Endothelial cell of umbilical vein (primary cell): ENCODE measurements at regions of chr11 and their contacts with region 1.

Region 1: DNA sequence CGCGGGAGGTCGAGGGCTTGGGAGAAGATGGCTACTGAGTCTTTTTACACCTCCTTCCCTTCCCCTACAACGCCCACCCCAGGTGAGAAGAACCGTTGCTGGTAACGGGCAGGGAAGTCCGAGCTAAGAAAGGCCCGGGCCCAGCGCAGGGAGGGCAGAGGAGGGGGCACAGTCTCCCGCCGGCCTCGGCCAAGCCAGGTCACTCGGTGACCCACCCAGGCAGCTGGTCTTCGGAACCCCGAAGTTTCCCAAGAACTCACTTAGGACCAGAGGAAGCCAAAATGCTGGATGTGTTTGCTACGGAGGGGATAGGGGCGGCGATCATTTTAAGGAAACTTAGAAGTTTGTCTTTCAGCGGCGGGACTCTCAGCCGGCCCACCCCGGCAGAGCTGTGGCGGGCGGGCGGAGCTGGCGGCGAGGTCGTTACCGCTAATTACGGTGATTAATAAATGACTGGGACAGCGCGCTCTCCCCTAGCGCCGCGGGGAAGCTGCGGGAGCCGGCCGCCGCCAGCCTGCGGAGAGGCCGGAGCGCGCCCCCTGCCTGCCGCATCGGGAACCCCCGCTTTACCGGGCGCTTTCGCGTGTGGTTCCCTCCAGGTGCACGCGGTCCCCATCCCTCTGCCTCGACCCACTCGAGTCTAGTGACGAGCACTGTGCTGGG is 820 bp downstream of the ROBO3 start:
- DNase-seq: peak; percentile 45
- H3K4me3 ChIP-seq: no peak overlapping the region
- H3K27ac ChIP-seq: no peak overlapping the region
- H3K4me1 ChIP-seq: peaks cover 9% of the 10 kb centered on the region
- H3K27me3 ChIP-seq: peaks cover 89 to 92% of the 10 kb centered on the region in 2 experiments
- CTCF ChIP-seq: peak; percentile 82 to 90
- POLR2A ChIP-seq: no peak

Region 2: GRCh38 chr11:124633355-124633754 is 232.7 kb before region 1 on chr11:
- CTCF ChIA-PET with region 1: interaction called, 22 read pairs
- POLR2A ChIA-PET with region 1: no interaction called
- dilution Hi-C with region 1: no loop called
- intact Hi-C with region 1: no loop called
- DNase-seq: peak; percentile 26
- H3K4me3 ChIP-seq: no peak overlapping the region
- H3K27ac ChIP-seq: no peak overlapping the region
- H3K4me1 ChIP-seq: no peaks in the 10 kb centered on the region
- H3K27me3 ChIP-seq: no peaks in the 10 kb centered on the region
- CTCF ChIP-seq: peak; percentile 26 to 36
- POLR2A ChIP-seq: no peak

Region 3: DNA sequence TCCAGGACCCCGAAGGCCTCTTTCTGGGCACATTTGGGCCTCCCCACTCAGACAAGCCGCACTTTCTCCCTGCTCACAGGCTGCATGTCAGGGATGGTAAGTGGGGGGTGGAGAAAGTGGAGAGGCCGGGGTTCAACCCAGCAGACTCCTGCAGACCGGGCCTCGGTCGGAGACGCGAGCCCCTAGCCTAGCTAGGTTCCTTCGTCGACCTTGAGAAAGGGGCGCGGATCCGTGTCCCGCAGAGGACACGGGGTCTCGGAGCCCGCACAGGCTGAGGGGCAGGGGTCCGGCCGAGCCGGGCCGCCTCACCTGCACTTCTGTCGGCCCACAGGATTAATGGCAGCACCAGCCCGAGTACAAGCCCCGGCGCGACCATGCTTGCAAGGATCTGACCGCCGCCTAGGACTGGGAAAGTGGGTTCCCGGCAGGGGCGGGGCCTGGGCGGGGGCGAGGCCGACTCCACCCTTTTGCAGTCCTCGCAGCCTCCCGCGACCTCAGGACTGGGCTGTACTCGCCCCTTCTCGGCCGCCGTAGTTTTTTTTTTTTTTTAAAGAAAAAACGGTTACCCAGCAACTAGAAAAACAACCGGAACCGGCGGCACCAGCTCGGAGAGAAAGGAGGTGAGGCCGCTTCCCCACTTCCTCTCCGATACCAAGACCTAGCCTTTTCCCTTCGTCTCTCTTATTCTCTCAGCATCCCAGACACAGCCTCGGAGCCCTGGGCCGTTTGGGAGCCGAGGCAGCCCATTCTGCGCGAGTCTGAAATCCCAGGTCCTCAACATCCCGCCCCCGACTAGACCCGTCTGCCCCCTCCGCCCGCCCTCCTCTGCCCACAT is 192.5 kb before region 1 on chr11 and contains the starts of genes SIAE and SPA17:
- CTCF ChIA-PET with region 1: interaction called, 64 read pairs
- POLR2A ChIA-PET with region 1: no interaction called
- dilution Hi-C with region 1: no loop called
- intact Hi-C with region 1: loop called (anchors 1 kb)
- DNase-seq: peak; percentile 97
- H3K4me3 ChIP-seq: peak within 1 kb of the TSS; percentile 65 to 95 (median 65)
- H3K27ac ChIP-seq: peak within 1 kb of the TSS; percentile 63
- H3K4me1 ChIP-seq: peaks cover 26% of the 10 kb centered on the region
- H3K27me3 ChIP-seq: no peaks in the 10 kb centered on the region
- CTCF ChIP-seq: no peak
- POLR2A ChIP-seq: peak; percentile 96
- total RNA-seq, gene SIAE: 15.1 and 16.9 TPM in 2 replicates
- total RNA-seq, gene SPA17: 4.7 and 6.1 TPM in 2 replicates

Region 4: GRCh38 chr11:124717786-124718651 is 148.0 kb before region 1 on chr11:
- CTCF ChIA-PET with region 1: no interaction called
- POLR2A ChIA-PET with region 1: no interaction called
- dilution Hi-C with region 1: no loop called
- intact Hi-C with region 1: no loop called
- DNase-seq: peak; percentile 78
- H3K4me3 ChIP-seq: peak overlapping the region; percentile 26 to 61 (median 39)
- H3K27ac ChIP-seq: peak overlapping the region; percentile 62
- H3K4me1 ChIP-seq: peaks cover 24% of the 10 kb centered on the region
- H3K27me3 ChIP-seq: no peaks in the 10 kb centered on the region
- CTCF ChIP-seq: no peak
- POLR2A ChIP-seq: peak; percentile 11

Region 5: DNA sequence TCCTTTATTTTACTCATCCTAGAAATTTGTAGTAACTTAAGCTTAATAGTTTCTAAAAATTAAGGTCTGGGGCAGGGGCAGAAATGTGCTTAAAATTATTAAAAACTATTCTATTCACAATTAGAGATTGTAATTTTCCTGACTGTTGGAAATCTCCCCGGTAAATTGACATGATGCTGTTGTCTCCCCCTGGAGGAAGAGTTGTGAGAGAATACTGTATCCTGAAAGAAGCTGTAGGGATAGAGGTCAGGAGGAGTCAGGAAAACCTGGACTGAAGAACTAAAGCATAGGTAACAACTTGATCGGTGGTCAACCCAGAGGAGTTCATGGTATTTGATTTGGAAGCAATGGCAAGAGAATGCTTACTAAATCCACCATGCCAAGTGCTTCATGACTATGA is 87.8 kb before region 1 on chr11:
- CTCF ChIA-PET with region 1: interaction called, 15 read pairs
- POLR2A ChIA-PET with region 1: no interaction called
- dilution Hi-C with region 1: no loop called
- intact Hi-C with region 1: no loop called
- DNase-seq: no peak
- H3K4me3 ChIP-seq: no peak overlapping the region
- H3K27ac ChIP-seq: no peak overlapping the region
- H3K4me1 ChIP-seq: no peaks in the 10 kb centered on the region
- H3K27me3 ChIP-seq: no peaks in the 10 kb centered on the region
- CTCF ChIP-seq: peak in 1 of 2 donors; percentile 26
- POLR2A ChIP-seq: no peak

Region 6: GRCh38 chr11:124846071-124846719 is 19.9 kb before region 1 on chr11:
- CTCF ChIA-PET with region 1: interaction called, 28 read pairs
- POLR2A ChIA-PET with region 1: no interaction called
- dilution Hi-C with region 1: no loop called
- intact Hi-C with region 1: no loop called
- DNase-seq: no peak
- H3K4me3 ChIP-seq: no peak overlapping the region
- H3K27ac ChIP-seq: no peak overlapping the region
- H3K4me1 ChIP-seq: no peaks in the 10 kb centered on the region
- H3K27me3 ChIP-seq: peaks cover 81 to 99% of the 10 kb centered on the region in 2 experiments
- CTCF ChIP-seq: no peak
- POLR2A ChIP-seq: no peak